HepG2 (cell line): ENCODE measurements at regions of chr20 and their contacts with region 1.

Region 1: GRCh38 chr20:50292324-50293243 is 102.0 kb downstream of the CEBPB start:
- DNase-seq: peak; percentile 97
- ATAC-seq: peak; percentile 69
- H3K4me3 ChIP-seq: peak overlapping the region in 1 of 3 experiments; percentile 39; a peak in 3 of 6 replicates
- H3K27ac ChIP-seq: peak overlapping the region; percentile 77
- H3K4me1 ChIP-seq: peaks cover 68% of the 10 kb centered on the region
- H3K27me3 ChIP-seq: no peaks in the 10 kb centered on the region
- CTCF ChIP-seq: peak; percentile 41
- EP300 ChIP-seq: peak; percentile 96 to 99
- POLR2A ChIP-seq: peak in 1 of 2 experiments; percentile 14; a peak in 2 of 4 replicates
- RAD21 ChIP-seq: peak; percentile 63

Region 2: DNA sequence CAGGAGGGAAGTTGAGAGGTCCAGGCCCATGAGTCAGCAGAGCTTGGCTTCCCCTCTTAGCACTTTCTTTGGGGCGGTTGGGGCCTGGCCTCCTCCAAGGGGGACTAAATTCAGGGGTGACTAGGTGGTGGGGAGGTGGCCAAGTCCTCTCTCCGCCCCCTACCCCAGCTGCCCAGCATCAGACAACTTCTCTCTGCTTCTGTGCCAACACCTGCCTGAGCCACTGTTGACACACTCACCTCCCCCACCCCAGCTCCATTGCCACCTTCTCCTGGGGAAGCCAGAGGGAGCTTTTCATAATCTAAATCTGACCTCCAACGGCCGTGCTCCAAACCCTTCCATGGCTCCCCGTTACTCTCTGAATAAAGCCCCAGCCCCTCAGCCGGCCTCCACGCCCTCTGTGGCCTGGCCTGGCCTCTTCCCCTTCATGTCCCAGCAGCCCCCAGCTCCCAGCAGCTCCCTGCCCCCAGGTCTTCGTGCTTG is 31.8 kb before region 1 on chr20:
- CTCF ChIA-PET with region 1: no interaction called
- POLR2A ChIA-PET with region 1: no interaction called
- in situ Hi-C with region 1: no loop called
- intact Hi-C with region 1: no loop called
- DNase-seq: no peak
- ATAC-seq: peak; percentile 21
- H3K4me3 ChIP-seq: peak overlapping the region in 1 of 3 experiments; percentile 26; a peak in 1 of 6 replicates
- H3K27ac ChIP-seq: no peak overlapping the region
- H3K4me1 ChIP-seq: peaks cover 66% of the 10 kb centered on the region
- H3K27me3 ChIP-seq: peaks cover 8 to 59% of the 10 kb centered on the region in 2 experiments; a peak in 4 of 5 replicates
- CTCF ChIP-seq: peak; percentile 37
- EP300 ChIP-seq: no peak
- POLR2A ChIP-seq: no peak
- RAD21 ChIP-seq: no peak

Region 3: DNA sequence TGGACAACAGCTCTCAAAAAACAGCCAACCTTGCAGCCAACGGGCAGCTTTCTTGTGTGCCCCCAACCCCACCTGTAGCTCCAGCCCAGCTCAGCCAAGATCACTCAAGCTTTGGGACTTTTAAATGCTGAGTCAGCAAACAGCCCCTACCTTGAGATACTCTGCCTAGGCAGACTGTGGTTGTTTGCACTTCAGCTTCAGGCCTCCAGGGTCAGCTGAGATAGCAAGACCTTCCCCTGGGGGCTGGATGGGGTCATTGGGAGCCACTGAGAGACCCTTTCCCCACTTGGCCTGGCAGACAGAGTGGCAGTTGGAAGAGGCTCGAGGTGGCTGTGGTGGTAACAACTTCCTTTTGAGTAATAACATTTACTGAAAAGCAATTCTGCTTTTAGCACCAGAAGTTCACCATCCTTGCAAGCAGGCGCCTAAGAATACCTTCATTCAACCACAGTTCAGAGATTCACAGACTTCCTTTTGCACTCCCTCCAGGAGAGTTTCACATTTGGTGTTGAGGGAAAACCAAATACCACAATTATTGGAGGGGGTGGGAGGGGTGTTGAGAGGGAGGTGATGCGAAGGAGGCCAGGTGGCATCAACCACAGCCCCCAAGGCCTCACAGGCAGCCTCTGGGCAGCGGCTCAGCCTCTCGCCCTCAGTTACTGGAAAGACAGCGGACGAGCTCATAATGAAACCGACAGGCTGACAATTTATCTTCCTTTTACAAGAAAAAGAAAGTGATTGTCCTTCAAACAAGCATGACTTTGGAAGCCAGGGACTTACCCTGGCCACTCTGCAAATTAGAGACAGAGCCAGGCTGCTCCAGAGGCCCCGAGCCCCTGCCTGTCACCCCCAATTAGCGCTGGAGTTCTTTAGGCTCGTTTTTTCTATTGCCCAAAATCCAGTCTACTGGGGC is 46.2 kb after region 1 on chr20:
- CTCF ChIA-PET with region 1: no interaction called
- POLR2A ChIA-PET with region 1: interaction called, 5 read pairs
- in situ Hi-C with region 1: no loop called
- intact Hi-C with region 1: loop called (anchors 5 kb)
- DNase-seq: peak; percentile 49
- ATAC-seq: peak; percentile 62
- H3K4me3 ChIP-seq: peak overlapping the region; percentile 20 to 39 (median 37); a peak in 5 of 6 replicates
- H3K27ac ChIP-seq: no peak overlapping the region
- H3K4me1 ChIP-seq: peaks cover 54% of the 10 kb centered on the region
- H3K27me3 ChIP-seq: peaks cover 3 to 33% of the 10 kb centered on the region in 2 experiments; a peak in 3 of 5 replicates
- CTCF ChIP-seq: 0 out of 2 replicates have a peak, but pooled peaks have one; percentile 14
- EP300 ChIP-seq: no peak; a peak in 1 of 4 replicates
- POLR2A ChIP-seq: no peak
- RAD21 ChIP-seq: no peak